ENCODE measurements at regions of chr18 and their contacts with region 1.

Region 1: DNA sequence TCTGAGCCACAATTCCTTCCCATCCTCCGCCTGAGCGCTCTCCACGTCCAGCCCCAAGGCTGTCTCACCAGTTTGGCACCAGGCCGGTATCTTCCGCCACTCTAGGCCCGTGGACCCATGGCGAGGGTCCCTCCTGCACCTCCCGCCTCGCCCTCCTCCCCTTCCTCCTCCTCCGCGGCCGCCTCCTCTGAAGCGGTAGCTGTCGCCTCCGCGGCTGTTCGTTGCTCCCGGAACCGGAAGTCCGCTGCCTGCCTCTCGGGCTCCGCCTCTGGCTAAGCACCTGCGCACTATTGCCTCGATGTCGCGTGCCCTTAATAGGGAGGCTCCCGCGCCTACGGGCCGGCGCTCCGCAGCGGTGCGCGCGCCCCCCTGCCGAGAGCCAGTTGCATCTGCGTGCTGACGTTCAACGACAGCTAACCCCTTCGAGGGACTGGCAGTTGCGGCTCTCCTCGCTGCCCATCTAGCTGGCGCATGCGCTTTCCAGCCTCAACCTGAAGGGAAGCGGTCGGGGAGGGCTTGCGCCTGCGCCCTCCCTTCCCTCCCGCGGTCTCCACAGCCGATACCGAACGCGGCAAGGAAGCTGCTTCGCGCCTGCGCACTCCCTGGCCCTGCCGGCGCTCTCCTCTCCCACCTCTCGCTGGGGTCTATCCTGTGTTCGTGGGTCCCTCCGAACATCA is at the start of gene MBD1:
- DNase-seq: peak; percentile 92 to 98
- H3K4me3 ChIP-seq: peak within 1 kb of the TSS; percentile 71 to 93
- H3K27ac ChIP-seq: peak within 1 kb of the TSS; percentile 92 to 97
- H3K4me1 ChIP-seq: peaks cover 3 to 23% of the 10 kb centered on the region in 2 donors
- H3K27me3 ChIP-seq: no peaks in the 10 kb centered on the region
- CTCF ChIP-seq: peak in 2 of 3 experiments; percentile 22 to 38
- total RNA-seq, gene MBD1: 53.4 TPM

Region 2: DNA sequence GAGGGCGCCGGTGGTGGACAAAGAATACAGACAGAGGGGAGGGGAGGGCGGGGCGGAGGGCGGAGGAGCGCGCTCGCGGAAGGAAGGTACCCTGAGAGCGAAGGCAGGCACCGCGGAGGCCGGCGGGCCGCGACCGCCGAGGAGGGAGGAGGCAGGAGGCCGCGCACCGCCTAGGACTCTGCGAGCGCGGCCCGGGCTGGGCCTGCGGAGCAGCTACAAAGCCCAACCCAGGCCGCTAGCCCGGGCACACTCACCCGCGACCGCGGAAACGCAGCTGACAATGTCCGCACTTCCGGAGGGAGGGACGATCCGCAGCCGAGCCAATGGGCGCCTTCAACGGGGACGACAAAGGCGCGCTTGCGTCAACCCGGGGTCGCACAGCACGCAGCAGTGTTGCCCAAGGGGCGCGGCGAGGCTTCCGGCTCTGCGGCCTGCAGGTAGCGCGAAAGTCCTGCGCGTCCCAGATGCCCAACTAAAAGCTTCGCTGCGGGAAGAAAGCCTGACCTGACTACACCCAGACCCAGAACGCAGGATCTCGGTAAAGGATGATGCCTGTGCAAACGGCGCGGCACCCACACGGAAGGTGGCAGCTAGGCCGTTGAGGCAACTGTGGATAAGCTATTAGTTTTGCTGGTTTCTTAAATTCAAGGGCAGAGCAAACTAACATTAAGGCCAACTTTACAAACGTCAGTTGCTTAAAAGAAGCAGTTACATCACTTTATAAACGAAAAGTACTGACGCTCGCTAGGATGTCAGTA is 794.3 kb before region 1 on chr18 and contains the start of gene C18orf32:
- intact Hi-C with region 1: loop called (anchors 5 kb)
- DNase-seq: peak; percentile 71 to 97
- H3K4me3 ChIP-seq: peak within 1 kb of the TSS; percentile 58 to 96
- H3K27ac ChIP-seq: peak within 1 kb of the TSS; percentile 93 to 98
- H3K4me1 ChIP-seq: peaks cover 4 to 13% of the 10 kb centered on the region in 2 donors
- H3K27me3 ChIP-seq: no peaks in the 10 kb centered on the region
- CTCF ChIP-seq: no peak
- total RNA-seq, gene C18orf32: 7.8 TPM

Region 3: GRCh38 chr18:50266248-50266704 is 15.2 kb before region 1 on chr18 and contains the start of gene CFAP53:
- intact Hi-C with region 1: loop called (anchors 1 kb)
- DNase-seq: peak; percentile 51 to 95
- H3K4me3 ChIP-seq: peak within 1 kb of the TSS; percentile 57 to 87
- H3K27ac ChIP-seq: no peak within 1 kb of the TSS
- H3K4me1 ChIP-seq: no peaks in the 10 kb centered on the region
- H3K27me3 ChIP-seq: no peaks in the 10 kb centered on the region
- CTCF ChIP-seq: no peak
- total RNA-seq, gene CFAP53: not detected

Region 4: DNA sequence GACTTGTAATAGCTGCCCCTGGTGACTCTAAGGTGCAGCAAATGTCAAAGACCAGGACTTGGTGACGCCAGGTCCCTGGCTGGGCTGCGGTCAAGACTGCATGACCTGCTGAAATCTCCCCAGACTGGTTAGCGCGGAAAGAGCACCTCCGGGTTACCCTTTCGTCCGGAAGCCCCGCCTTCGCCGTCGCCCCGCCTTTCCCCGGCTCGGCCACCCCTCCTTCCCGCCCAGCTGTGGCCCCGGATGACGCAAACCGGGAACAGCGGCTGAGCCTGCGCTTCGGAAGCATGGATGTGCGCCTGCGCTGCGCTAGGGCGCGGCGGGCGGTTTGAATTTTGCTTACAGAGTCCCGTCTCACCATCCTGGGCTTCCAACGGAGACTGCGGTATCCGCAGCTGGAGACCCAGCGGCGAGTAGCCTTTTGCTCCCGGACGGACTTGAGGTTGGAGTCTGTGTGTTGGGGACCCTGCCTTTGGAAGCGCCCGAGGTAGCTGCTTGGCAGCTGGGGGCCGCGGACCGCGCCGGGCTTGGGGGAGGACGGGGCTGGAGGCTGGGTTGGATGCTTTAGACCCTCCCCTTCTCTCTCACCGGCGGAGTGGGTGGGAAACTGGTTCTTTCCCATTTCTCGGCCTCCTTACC is 93.4 kb after region 1 on chr18 and contains the start of gene SKA1:
- intact Hi-C with region 1: loop called (anchors 2 kb)
- DNase-seq: peak; percentile 62 to 93
- H3K4me3 ChIP-seq: peak within 1 kb of the TSS; percentile 50 to 70
- H3K27ac ChIP-seq: peak within 1 kb of the TSS; percentile 14 to 72
- H3K4me1 ChIP-seq: peaks cover 0 to 7% of the 10 kb centered on the region in 2 donors
- H3K27me3 ChIP-seq: no peaks in the 10 kb centered on the region
- CTCF ChIP-seq: no peak
- total RNA-seq, gene SKA1: not detected

Measured in ascending aorta (tissue), 2 donors.